ENCODE measurements at regions of chr1 and their contacts with region 1.

Region 1: GRCh38 chr1:205061665-205062069 is 18.7 kb downstream of the CNTN2 start:
- DNase-seq: peak; percentile 84
- H3K4me3 Mint-ChIP-seq: no peak overlapping the region
- H3K27ac Mint-ChIP-seq: no peak overlapping the region
- H3K4me1 Mint-ChIP-seq: no peaks in the 10 kb centered on the region
- H3K27me3 Mint-ChIP-seq: no peaks in the 10 kb centered on the region

Region 2: DNA sequence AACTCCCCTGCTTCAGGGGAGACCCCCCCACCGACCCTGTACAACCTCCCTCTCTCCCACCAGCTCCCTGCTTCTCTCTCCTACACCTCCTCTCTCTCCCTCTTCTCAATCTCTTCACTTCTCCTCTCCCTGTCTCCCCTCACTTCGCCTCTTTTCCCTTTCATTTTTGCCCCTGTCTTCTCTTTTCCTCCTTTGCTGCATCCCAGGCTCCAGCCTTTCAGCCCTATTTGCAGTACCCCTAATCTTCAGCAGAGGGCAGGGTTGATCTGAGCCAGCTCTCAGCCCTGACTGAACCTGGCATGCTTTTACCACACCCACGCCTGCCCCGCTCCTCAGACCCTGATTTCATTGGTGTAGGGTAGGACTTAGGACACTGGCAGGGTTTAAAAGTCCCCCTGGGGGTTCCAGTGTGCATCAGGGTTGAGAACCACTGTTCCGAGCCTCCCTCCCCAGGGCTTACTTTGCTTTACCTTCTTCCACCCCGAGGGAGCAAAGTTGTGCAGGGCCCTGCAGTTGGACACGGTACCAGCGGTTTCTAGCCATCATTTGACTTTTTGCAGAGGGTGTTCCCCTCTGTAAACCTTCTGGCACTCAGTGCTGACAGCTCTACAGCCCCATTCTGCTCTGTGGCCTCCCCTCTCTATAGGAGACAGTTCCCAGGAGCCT is 86.0 kb before region 1 on chr1:
- CTCF ChIA-PET with region 1: interaction called, 17 read pairs
- POLR2A ChIA-PET with region 1: no interaction called
- DNase-seq: peak; percentile 58
- H3K4me3 Mint-ChIP-seq: no peak overlapping the region
- H3K27ac Mint-ChIP-seq: no peak overlapping the region
- H3K4me1 Mint-ChIP-seq: peaks cover 11% of the 10 kb centered on the region
- H3K27me3 Mint-ChIP-seq: peaks cover 18% of the 10 kb centered on the region

Region 3: DNA sequence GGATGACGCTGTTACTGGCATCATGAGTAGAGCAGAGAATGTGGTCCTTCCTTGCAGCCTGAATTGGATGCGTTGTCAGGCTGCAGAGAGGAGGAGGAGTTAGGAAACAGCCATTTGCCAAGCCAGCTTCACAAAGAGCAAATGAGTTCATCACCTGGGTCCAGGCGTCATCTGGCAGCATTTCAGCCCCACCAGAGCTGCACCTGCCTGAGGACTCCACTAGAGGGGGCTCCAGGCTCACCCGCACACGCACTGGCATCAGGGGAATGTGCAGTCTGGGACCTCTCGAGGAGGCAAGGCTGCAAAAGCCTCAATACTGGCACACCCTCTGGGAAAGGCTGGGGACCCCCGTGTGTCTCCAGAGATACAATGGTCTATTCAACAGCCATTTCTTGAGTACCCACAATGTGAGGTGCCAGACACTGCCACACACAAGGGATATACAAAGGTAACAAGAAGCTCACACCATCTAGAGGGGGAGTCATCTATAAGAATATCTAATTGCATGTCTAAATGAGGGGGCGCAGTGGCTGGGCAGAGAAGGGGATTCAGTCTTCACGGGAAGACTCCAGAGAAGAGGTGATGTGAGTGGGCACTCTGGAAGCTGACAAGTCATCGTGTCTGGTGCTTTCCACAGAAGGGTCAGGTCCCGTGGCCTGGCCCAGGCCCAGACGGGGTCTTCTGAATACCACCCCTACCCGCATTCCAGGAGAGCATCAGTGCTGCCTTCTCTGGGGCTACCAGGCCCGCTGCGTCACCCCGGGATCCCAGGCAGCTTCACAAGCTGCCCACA is 72.2 kb before region 1 on chr1:
- CTCF ChIA-PET with region 1: interaction called, 25 read pairs
- POLR2A ChIA-PET with region 1: no interaction called
- DNase-seq: peak; percentile 63
- H3K4me3 Mint-ChIP-seq: no peak overlapping the region
- H3K27ac Mint-ChIP-seq: no peak overlapping the region
- H3K4me1 Mint-ChIP-seq: peaks cover 18% of the 10 kb centered on the region
- H3K27me3 Mint-ChIP-seq: peaks cover 4% of the 10 kb centered on the region

Region 4: GRCh38 chr1:205071801-205072200 is 10.1 kb after region 1 on chr1:
- CTCF ChIA-PET with region 1: interaction called, 11 read pairs
- POLR2A ChIA-PET with region 1: no interaction called
- DNase-seq: no peak
- H3K4me3 Mint-ChIP-seq: no peak overlapping the region
- H3K27ac Mint-ChIP-seq: no peak overlapping the region
- H3K4me1 Mint-ChIP-seq: no peaks in the 10 kb centered on the region
- H3K27me3 Mint-ChIP-seq: no peaks in the 10 kb centered on the region

Region 5: DNA sequence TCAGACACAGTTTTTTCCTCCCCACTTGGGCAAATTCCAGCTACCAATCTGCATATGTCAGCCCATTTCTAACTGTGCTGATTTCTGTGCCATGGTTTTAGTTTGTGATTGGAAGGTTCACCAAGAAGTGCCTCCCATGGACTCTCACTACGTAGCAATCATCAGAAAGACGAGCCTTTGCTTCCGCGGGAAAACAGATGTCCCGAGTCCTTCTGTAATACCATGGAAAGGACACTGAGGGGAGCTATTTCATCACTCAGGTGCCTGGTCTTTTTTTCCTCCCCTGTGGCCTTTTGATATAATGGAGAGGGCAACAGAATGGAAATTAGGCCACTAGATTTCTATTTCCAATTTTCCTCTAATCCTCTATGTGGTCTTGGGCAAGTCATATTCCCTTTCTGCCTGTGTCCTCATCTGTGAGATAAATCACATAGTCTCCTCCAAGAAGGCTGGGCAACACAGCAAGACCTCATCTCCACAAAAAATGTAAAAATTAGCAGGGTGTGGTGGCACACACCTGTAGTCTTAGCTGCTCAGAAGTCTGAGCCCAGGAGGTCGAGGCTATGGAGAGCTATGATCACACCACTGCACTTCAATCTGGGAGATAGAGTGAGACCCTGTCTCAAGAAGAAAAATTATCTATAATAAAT is 335.4 kb after region 1 on chr1:
- CTCF ChIA-PET with region 1: no interaction called
- POLR2A ChIA-PET with region 1: no interaction called
- DNase-seq: peak; percentile 25
- H3K4me3 Mint-ChIP-seq: no peak overlapping the region
- H3K27ac Mint-ChIP-seq: no peak overlapping the region
- H3K4me1 Mint-ChIP-seq: no peaks in the 10 kb centered on the region
- H3K27me3 Mint-ChIP-seq: peaks cover 44% of the 10 kb centered on the region

Measured in activated CD4-positive, alpha-beta T cell treated with anti-CD3 and anti-CD28 coated beads, Interleukin-2, amount 10 ng/mL, durations not matched to agents 7 days and 5 days (primary cell).